CD8-positive, alpha-beta T cell (primary cell): ENCODE measurements at regions of chr12 and their contacts with region 1.

Region 1: GRCh38 chr12:12488823-12489550 is 73.7 kb downstream of the DUSP16 start:
- DNase-seq: no peak
- ATAC-seq: peak; percentile 39
- H3K4me3 ChIP-seq: no peak overlapping the region
- H3K4me3 Mint-ChIP-seq: no peak overlapping the region
- H3K27ac ChIP-seq: no peak overlapping the region
- H3K27ac Mint-ChIP-seq: peak overlapping the region; percentile 28
- H3K4me1 ChIP-seq: no peaks in the 10 kb centered on the region
- H3K4me1 Mint-ChIP-seq: peaks cover 23% of the 10 kb centered on the region
- H3K27me3 ChIP-seq: no peaks in the 10 kb centered on the region
- H3K27me3 Mint-ChIP-seq: no peaks in the 10 kb centered on the region
- CTCF ChIP-seq: no peak

Region 2: GRCh38 chr12:12616512-12617310 is 127.7 kb after region 1 on chr12:
- CTCF ChIA-PET with region 1: no interaction called
- POLR2A ChIA-PET with region 1: no interaction called
- intact Hi-C with region 1: loop called in 1 of 2 experiments (anchors 2 kb)
- DNase-seq: peak in 1 of 9 experiments; percentile 24
- ATAC-seq: no peak
- H3K4me3 ChIP-seq: no peak overlapping the region
- H3K4me3 Mint-ChIP-seq: peak overlapping the region; percentile 27
- H3K27ac ChIP-seq: no peak overlapping the region
- H3K27ac Mint-ChIP-seq: peak overlapping the region; percentile 87
- H3K4me1 ChIP-seq: peaks cover 68% of the 10 kb centered on the region
- H3K4me1 Mint-ChIP-seq: peaks cover 68% of the 10 kb centered on the region
- H3K27me3 ChIP-seq: no peaks in the 10 kb centered on the region
- H3K27me3 Mint-ChIP-seq: no peaks in the 10 kb centered on the region
- CTCF ChIP-seq: no peak

Region 3: DNA sequence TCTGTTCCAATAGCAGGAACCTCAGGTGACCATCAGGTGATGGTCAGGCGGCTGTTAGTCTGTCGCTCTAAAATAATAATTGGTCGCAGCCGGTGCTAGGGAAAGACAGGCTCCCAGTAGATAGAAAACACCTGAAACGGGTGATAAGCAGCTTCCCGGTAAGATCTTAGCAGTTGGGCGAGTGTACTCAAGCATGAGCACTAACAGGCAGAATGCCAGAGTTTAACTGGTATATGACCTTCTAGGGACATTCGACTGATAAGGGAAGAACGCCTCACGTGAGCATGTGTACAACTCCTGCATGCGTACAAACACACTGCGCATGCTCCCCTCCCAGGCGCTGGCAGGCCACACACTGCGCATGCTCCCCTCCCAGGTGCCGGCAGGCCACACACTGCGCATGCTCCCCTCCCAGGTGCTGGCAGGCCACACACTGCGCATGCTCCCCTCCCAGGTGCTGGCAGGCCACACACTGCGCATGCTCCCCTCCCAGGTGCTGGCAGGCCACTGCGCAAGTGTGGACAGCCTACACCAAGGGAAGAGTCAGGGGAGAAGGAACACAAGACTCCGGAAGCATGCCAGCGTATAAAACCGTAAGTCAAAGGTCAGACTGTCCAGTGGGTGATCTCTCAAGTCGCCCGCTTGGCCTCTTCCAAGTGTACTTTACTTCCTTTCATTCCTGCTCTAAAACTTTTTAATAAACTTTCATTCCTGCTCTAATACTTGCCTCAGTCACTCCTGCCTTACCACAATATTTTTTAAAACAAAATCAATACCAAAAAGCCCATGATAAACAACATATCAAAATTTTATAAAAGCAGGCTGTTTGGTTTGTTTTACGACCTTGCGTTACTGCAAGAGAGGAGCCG is 438.5 kb after region 1 on chr12:
- CTCF ChIA-PET with region 1: no interaction called
- POLR2A ChIA-PET with region 1: no interaction called
- intact Hi-C with region 1: no loop called
- DNase-seq: peak in 6 of 9 experiments; percentile 1 to 70 (median 36)
- ATAC-seq: no peak
- H3K4me3 ChIP-seq: peak overlapping the region in 1 of 2 experiments; percentile 22
- H3K4me3 Mint-ChIP-seq: no peak overlapping the region
- H3K27ac ChIP-seq: no peak overlapping the region
- H3K27ac Mint-ChIP-seq: no peak overlapping the region
- H3K4me1 ChIP-seq: no peaks in the 10 kb centered on the region
- H3K4me1 Mint-ChIP-seq: no peaks in the 10 kb centered on the region
- H3K27me3 ChIP-seq: no peaks in the 10 kb centered on the region
- H3K27me3 Mint-ChIP-seq: peaks cover 10% of the 10 kb centered on the region
- CTCF ChIP-seq: no peak